PC-3 (cell line): ENCODE measurements at regions of chr2 and their contacts with region 1.

Region 1: DNA sequence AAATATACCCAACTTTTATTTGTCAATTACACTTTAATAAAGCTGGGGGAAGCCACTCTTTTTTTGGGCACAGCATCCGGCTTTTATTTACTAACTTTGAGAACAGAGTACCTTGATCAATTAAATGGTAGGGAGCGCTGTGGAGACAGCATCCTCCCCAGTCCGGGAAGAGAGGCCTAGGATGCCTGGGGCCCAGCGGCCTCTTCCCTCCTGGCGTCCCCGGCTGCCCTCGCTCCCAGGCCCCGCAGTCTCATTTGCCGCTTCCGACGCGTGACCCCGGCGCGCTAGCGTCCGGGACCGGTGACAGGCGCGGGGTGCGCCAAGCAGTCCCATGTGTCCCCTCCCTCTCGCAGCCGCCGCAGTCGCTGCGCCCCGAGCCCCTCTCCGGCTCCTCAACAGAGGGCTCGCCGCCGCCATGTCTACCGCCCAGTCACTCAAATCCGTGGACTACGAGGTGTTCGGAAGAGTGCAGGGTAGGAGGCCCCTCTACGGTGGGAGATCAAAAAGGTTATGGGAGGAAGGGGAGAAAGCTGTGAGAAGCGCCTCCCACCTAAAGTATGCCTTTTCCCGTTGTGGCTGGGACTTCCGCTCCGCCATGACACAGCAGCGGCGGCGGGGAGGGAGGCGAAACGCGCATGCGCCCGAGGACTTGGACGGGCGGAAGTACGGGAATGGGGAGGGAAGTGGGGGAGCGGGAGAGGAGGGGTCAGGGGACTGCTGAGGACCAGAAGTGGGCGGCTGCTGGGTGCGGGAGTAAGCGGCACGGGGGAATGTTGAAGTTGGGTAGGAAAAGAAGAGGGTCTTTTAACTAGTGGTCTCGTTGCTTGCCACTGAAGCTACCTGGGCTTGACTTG is at the start of gene ACYP2:
- DNase-seq: peak; percentile 93
- ATAC-seq: peak; percentile 90
- H3K4me3 ChIP-seq: peak within 1 kb of the TSS; percentile 82
- H3K27ac ChIP-seq: peak within 1 kb of the TSS; percentile 92
- H3K4me1 ChIP-seq: peaks cover 8% of the 10 kb centered on the region; the same call in 1 of the 2 replicates
- H3K27me3 ChIP-seq: no peaks in the 10 kb centered on the region
- CTCF ChIP-seq: peak; percentile 42; the same call in 1 of the 2 replicates
- total RNA-seq, gene ACYP2: 2.9 and 8.3 TPM in 2 replicates

Region 2: DNA sequence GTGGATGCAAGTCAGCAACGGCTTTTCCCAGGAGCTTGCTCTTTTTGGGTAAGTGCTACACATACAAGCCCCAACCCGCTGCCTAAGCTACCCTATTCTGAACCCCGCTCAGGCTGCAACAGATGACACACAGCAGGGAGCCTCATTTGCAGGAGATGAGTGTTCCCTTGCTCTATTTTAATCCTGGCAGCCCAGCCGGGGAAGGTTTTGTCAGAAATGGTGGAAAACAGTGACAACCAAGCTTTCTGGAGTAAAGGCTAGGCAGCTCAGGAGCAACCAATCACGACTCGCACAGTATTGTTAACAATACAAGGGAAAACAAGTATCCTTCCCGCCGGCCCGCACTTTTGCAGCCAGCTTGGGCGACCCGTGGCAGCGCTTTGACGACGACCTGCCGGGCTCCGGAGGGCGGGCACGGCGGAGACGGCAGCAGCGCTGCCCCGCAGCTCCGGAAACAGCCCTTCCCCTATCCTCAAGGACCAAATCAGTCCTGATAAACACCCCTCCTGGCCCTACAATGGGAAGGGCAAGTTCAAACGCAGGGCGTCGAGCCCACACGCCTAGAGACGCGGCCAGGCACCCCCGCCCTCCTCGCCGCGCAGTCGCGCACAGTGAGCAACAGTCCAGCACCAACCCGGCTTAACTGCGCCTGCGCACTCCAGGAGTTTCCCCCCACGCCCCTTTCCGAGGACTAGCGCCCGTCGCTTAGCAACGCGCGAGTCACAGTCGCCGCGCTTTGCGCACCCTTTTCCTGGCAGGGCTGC is 214.8 kb after region 1 on chr2:
- CTCF ChIA-PET with region 1: no interaction called
- POLR2A ChIA-PET with region 1: no interaction called
- intact Hi-C with region 1: loop called (anchors 5 kb)
- DNase-seq: peak; percentile 96
- ATAC-seq: peak; percentile 97
- H3K4me3 ChIP-seq: peak overlapping the region; percentile 68
- H3K27ac ChIP-seq: no peak overlapping the region
- H3K4me1 ChIP-seq: peaks cover 18% of the 10 kb centered on the region
- H3K27me3 ChIP-seq: no peaks in the 10 kb centered on the region
- CTCF ChIP-seq: no peak